GM10248 (cell line): ENCODE measurements at regions of chr21 and their contacts with region 1.

Region 1: GRCh38 chr21:36429947-36430546 is 44.9 kb downstream of the CHAF1B start:
- DNase-seq: peak; percentile 84
- CTCF ChIP-seq: no peak

Region 2: DNA sequence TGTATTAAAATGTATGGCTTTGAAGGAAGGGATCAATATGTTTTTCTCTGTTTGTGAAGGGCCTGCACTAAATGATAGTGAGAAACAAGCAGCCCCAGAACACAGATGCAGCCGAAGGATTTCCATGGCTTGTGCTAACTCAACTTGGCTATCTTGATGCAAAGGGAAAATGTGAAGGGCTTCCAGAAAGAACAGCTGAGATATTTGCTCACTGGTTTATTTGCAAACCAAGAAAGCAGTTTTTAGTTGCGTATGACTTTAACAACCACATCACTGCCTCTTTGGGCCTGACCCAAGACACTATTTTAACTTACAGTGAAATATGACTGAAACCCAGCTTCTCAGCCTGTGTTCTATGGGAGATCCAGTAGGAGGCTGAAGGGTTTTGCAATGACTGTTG is 739.6 kb before region 1 on chr21:
- CTCF ChIA-PET with region 1: no interaction called
- POLR2A ChIA-PET with region 1: no interaction called
- DNase-seq: no peak
- CTCF ChIP-seq: no peak

Region 3: DNA sequence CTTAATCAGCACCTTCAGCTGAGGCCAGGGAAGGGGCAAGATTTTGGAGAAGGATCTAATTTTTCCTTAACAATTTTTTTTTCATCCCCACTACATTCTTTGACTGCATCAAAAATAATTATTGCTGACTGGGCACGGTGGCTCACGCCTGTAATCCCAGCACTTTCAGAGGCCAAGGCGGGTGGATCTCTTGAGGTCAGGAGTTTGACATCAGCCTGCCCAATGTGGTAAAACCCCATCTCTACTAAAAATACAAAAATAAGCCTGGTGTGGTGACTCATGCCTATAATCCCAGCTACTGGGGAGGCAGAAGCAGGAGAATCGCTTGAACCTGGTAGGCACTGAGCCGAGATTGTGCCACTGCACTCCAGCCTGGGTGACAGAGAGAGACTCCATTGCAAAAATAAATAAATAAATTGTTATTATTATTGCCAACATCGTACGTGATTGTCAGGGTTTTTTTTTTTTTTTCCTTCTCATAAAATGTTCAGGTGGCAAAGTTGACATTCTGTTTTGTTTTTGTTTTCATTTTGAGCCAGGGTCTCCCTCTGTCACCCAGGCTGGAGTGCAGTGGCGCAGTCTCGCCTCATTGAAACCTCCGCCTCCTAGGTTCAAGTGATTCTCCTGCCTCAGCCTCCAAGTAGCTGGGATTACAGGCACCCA is 147.3 kb before region 1 on chr21:
- CTCF ChIA-PET with region 1: no interaction called
- POLR2A ChIA-PET with region 1: no interaction called
- DNase-seq: no peak
- CTCF ChIP-seq: no peak

Region 4: GRCh38 chr21:36419996-36420395 is 10.1 kb before region 1 on chr21:
- CTCF ChIA-PET with region 1: interaction called, 12 read pairs
- POLR2A ChIA-PET with region 1: no interaction called
- DNase-seq: peak; percentile 86
- CTCF ChIP-seq: peak; percentile 73

Region 5: DNA sequence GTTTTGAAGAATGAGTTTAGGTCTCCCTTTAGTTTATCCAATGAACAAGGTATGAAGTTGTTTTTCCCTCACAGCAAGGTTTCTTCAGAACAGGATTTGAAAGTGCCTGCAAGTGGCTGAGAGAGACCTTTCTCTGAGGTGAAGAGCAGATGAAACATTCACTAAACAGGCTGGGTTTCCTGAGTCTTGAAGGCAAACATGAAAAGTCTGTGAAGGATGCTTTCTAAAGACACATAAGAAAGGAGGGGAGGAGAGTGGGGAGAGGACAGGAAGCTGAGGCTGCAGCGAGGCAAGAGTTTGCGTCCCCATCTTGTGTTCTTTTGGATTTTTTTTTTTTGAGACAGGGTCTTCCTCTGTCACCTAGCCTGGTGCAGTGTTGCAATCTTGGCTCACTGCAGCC is 173.2 kb after region 1 on chr21:
- CTCF ChIA-PET with region 1: no interaction called
- POLR2A ChIA-PET with region 1: no interaction called
- DNase-seq: no peak
- CTCF ChIP-seq: no peak